Activated CD4-positive, alpha-beta memory T cell treated with anti-CD3 and anti-CD28 coated beads, Interleukin-2, amount 10 ng/mL, durations not matched to agents 7 days and 5 days (primary cell): ENCODE measurements at regions of chr1 and their contacts with region 1.

Region 1: DNA sequence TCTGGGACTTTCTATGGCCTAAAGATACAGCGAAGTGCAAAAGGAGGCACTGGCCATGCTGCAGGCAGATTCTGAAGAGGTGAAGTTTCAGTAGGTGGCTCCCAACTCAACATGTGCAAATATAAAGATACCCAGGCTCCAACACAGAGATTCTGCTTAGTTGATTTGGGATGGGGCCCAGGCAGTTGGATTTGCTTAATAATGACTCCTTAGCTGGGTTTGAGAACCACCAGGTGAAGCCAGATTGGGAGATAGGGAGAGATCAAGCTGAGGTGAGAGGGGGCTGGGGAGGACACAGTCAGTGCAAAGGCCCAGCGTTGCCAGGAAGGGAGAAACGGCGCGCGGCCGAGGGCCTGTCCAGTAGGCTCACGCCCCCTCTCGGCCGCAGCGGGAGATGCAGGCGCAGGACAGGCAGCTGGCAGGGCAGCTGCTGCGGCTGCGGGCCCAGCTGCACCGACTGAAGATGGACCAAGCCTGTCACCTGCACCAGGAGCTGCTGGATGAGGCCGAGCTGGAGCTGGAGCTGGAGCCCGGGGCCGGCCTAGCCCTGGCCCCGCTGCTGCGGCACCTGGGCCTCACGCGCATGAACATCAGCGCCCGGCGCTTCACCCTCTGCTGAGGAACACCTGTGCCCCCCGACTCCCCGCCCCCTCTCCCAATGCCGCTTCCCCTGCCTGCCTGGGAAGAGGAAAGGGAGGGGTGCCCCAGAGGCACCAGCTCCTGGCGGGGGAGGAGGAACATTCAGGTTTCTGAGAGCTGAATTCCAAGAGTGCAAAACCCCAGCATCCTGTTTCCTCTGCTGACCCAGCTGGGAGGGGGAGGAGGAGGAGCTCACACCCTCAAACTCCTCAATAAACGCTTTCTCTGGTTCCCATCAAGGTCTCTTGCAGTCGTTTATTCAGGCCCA is 1.2 kb downstream of the FAM167B start:
- DNase-seq: peak; percentile 83
- H3K4me3 Mint-ChIP-seq: peak overlapping the region; percentile 63
- H3K27ac Mint-ChIP-seq: peak overlapping the region; percentile 99
- H3K4me1 Mint-ChIP-seq: peaks cover 48% of the 10 kb centered on the region
- H3K27me3 Mint-ChIP-seq: no peaks in the 10 kb centered on the region

Region 2: GRCh38 chr1:32179443-32180185 is 68.6 kb before region 1 on chr1 and contains the start of gene TXLNA:
- CTCF ChIA-PET with region 1: interaction called, 9 read pairs
- POLR2A ChIA-PET with region 1: interaction called, 27 read pairs
- DNase-seq: peak; percentile 92
- H3K4me3 Mint-ChIP-seq: peak within 1 kb of the TSS; percentile 88
- H3K27ac Mint-ChIP-seq: peak within 1 kb of the TSS; percentile 96
- H3K4me1 Mint-ChIP-seq: peaks cover 43% of the 10 kb centered on the region
- H3K27me3 Mint-ChIP-seq: no peaks in the 10 kb centered on the region
- total RNA-seq, gene TXLNA: 79.8 to 81.2 TPM

Region 3: GRCh38 chr1:32221980-32222755 is 26.1 kb before region 1 on chr1 and contains the starts of genes EIF3I and TMEM234:
- CTCF ChIA-PET with region 1: interaction called, 57 read pairs
- POLR2A ChIA-PET with region 1: interaction called, 38 read pairs
- DNase-seq: peak; percentile 93
- H3K4me3 Mint-ChIP-seq: peak within 1 kb of the TSS; percentile 97
- H3K27ac Mint-ChIP-seq: peak within 1 kb of the TSS; percentile 94
- H3K4me1 Mint-ChIP-seq: peaks cover 46% of the 10 kb centered on the region
- H3K27me3 Mint-ChIP-seq: no peaks in the 10 kb centered on the region
- total RNA-seq, gene EIF3I: 161 to 172 TPM
- total RNA-seq, gene TMEM234: 15.3 to 16.4 TPM

Region 4: GRCh38 chr1:32266921-32267591 is 18.8 kb after region 1 on chr1:
- CTCF ChIA-PET with region 1: interaction called, 31 read pairs
- POLR2A ChIA-PET with region 1: interaction called, 156 read pairs
- DNase-seq: no peak
- H3K4me3 Mint-ChIP-seq: peak overlapping the region; percentile 67
- H3K27ac Mint-ChIP-seq: peak overlapping the region; percentile 93
- H3K4me1 Mint-ChIP-seq: peaks cover 62% of the 10 kb centered on the region
- H3K27me3 Mint-ChIP-seq: no peaks in the 10 kb centered on the region

Region 5: GRCh38 chr1:32291708-32292492 is 43.7 kb after region 1 on chr1 and contains the start of gene HDAC1:
- CTCF ChIA-PET with region 1: interaction called, 14 read pairs
- POLR2A ChIA-PET with region 1: interaction called, 35 read pairs
- DNase-seq: peak; percentile 98
- H3K4me3 Mint-ChIP-seq: peak within 1 kb of the TSS; percentile 91
- H3K27ac Mint-ChIP-seq: peak within 1 kb of the TSS; percentile 84
- H3K4me1 Mint-ChIP-seq: peaks cover 53% of the 10 kb centered on the region
- H3K27me3 Mint-ChIP-seq: no peaks in the 10 kb centered on the region
- total RNA-seq, gene HDAC1: 180 to 185 TPM

Region 6: GRCh38 chr1:32335790-32336590 is 87.8 kb after region 1 on chr1 and contains the start of gene MARCKSL1:
- CTCF ChIA-PET with region 1: interaction called, 6 read pairs
- POLR2A ChIA-PET with region 1: interaction called, 26 read pairs
- DNase-seq: peak; percentile 82
- H3K4me3 Mint-ChIP-seq: peak within 1 kb of the TSS; percentile 79
- H3K27ac Mint-ChIP-seq: peak within 1 kb of the TSS; percentile 13
- H3K4me1 Mint-ChIP-seq: peaks cover 37% of the 10 kb centered on the region
- H3K27me3 Mint-ChIP-seq: peaks cover 13% of the 10 kb centered on the region
- total RNA-seq, gene MARCKSL1: 26.4 to 27.9 TPM

Region 7: DNA sequence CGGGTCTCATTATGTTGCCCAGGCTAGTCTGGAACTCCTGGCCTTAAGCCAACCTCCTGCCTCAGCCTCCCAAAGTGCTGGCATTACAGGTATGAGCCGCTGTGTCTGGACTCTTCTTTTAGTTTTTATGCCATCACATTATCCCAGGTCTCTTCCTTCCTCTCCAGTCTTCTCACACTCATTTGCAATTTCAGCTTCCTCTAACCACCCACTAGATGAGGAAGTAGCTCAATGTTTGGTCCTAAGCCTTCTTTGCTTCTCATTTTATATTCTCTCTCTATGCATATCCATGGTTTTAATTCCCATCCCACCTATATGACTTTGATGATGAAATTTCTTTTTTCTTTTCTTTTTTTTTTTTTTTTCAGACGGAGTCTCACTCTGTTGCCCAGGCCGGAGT is 287.9 kb after region 1 on chr1:
- CTCF ChIA-PET with region 1: no interaction called
- POLR2A ChIA-PET with region 1: no interaction called
- DNase-seq: no peak
- H3K4me3 Mint-ChIP-seq: no peak overlapping the region
- H3K27ac Mint-ChIP-seq: no peak overlapping the region
- H3K4me1 Mint-ChIP-seq: peaks cover 9% of the 10 kb centered on the region
- H3K27me3 Mint-ChIP-seq: peaks cover 65% of the 10 kb centered on the region

Region 8: GRCh38 chr1:32612189-32612881 is 364.1 kb after region 1 on chr1:
- CTCF ChIA-PET with region 1: no interaction called
- POLR2A ChIA-PET with region 1: no interaction called
- DNase-seq: peak; percentile 48
- H3K4me3 Mint-ChIP-seq: peak overlapping the region; percentile 57
- H3K27ac Mint-ChIP-seq: no peak overlapping the region
- H3K4me1 Mint-ChIP-seq: peaks cover 4% of the 10 kb centered on the region
- H3K27me3 Mint-ChIP-seq: no peaks in the 10 kb centered on the region